Activated CD4-positive, alpha-beta memory T cell treated with anti-CD3 and anti-CD28 coated beads for 36 hours (primary cell): ENCODE measurements at regions of chr1 and their contacts with region 1.

Region 1: GRCh38 chr1:90721210-90722194 is 4.4 kb upstream of the BARHL2 start:
- DNase-seq: peak; percentile 71
- H3K4me3 Mint-ChIP-seq: no peak overlapping the region
- H3K27ac Mint-ChIP-seq: no peak overlapping the region
- H3K4me1 Mint-ChIP-seq: peaks cover 45% of the 10 kb centered on the region
- H3K27me3 Mint-ChIP-seq: peaks cover 83% of the 10 kb centered on the region

Region 2: DNA sequence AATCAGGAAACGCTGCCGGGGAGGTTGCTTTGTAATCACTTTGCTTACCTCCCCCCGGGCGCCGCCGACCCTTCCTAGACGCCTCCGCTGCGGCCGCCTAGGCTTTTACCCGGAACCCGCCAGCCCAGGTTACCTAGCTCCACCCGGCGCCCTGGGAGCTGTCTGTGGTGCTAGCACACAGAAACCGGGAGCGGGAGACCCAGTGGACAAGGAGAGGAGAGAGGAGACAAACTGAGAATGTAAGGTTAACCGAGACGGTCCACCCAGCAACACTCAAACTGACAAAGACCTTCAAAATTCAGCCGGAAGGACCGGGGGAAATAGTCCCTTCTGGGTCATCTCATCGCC is 14.2 kb before region 1 on chr1:
- CTCF ChIA-PET with region 1: interaction called, 16 read pairs
- POLR2A ChIA-PET with region 1: no interaction called
- intact Hi-C with region 1: loop called (anchors 2 kb)
- DNase-seq: peak; percentile 44
- H3K4me3 Mint-ChIP-seq: peak overlapping the region; percentile 54
- H3K27ac Mint-ChIP-seq: no peak overlapping the region
- H3K4me1 Mint-ChIP-seq: peaks cover 15% of the 10 kb centered on the region
- H3K27me3 Mint-ChIP-seq: peaks cover 73% of the 10 kb centered on the region

Region 3: DNA sequence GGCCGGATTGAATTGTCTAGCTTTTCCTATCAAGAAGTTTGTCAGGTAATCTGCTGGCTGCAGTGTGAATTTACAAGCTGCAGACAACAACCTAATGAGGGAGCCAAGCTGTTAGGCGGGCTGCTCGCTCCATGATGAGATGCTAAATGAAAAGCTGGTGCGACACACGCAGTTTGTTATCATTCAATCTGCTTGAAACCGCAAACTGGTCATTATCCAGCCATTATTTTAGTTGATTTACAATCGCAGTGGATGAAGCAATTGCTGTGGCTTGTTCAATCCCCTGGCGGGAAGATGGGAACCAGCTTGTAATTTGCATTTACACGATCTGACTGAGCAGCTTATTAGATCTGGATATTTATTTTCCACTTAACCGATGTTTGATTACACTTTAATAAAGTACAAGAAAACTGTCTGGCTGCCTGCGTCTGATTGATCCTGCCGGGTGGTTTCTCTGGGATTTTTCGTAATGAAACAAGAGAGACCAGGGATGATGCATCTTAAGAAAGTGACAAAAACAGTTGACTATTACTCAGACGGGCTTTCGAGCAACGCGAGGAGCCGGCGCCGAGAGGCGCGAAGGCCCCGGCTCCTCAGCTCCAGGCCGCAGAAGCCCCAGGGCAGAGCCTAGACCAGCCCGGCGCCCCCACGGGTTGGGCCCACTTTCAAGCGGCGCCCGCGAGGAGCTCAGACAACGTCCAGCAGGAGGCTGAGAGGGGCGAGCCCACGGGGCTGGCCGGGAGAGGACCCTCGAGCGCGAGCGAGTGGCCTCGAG is 113.6 kb after region 1 on chr1:
- CTCF ChIA-PET with region 1: no interaction called
- POLR2A ChIA-PET with region 1: no interaction called
- intact Hi-C with region 1: loop called (anchors 2 kb)
- DNase-seq: peak; percentile 46
- H3K4me3 Mint-ChIP-seq: no peak overlapping the region
- H3K27ac Mint-ChIP-seq: no peak overlapping the region
- H3K4me1 Mint-ChIP-seq: peaks cover 23% of the 10 kb centered on the region
- H3K27me3 Mint-ChIP-seq: peaks cover 79% of the 10 kb centered on the region

Region 4: GRCh38 chr1:90850898-90851710 is 129.6 kb after region 1 on chr1:
- CTCF ChIA-PET with region 1: interaction called, 6 read pairs
- POLR2A ChIA-PET with region 1: no interaction called
- intact Hi-C with region 1: loop called (anchors 5 kb)
- DNase-seq: peak; percentile 86
- H3K4me3 Mint-ChIP-seq: peak overlapping the region; percentile 66
- H3K27ac Mint-ChIP-seq: no peak overlapping the region
- H3K4me1 Mint-ChIP-seq: peaks cover 6% of the 10 kb centered on the region
- H3K27me3 Mint-ChIP-seq: peaks cover 33% of the 10 kb centered on the region

Region 5: GRCh38 chr1:90964444-90965035 is 243.0 kb after region 1 on chr1:
- CTCF ChIA-PET with region 1: interaction called, 7 read pairs
- POLR2A ChIA-PET with region 1: no interaction called
- intact Hi-C with region 1: loop called (anchors 1 kb)
- DNase-seq: no peak
- H3K4me3 Mint-ChIP-seq: no peak overlapping the region
- H3K27ac Mint-ChIP-seq: no peak overlapping the region
- H3K4me1 Mint-ChIP-seq: peaks cover 38% of the 10 kb centered on the region
- H3K27me3 Mint-ChIP-seq: no peaks in the 10 kb centered on the region